Activated T-helper 2 cell treated with anti-CD3 and anti-CD28 coated beads, Interferon-gamma antibody, Interleukin-2, Interleukin-4, amounts not matched to agents 10 μg/mL and 5 μg/mL and 100 μg/mL, durations not matched to agents 14 hours and 24 hours and 36 hours (primary cell): ENCODE measurements at regions of chr20 and their contacts with region 1.

Region 1: GRCh38 chr20:58980700-58981627 is at the start of gene NELFCD:
- DNase-seq: peak; percentile 83
- H3K4me3 Mint-ChIP-seq: peak within 1 kb of the TSS; percentile 93
- H3K27ac Mint-ChIP-seq: peak within 1 kb of the TSS; percentile 90
- H3K4me1 Mint-ChIP-seq: peaks cover 27% of the 10 kb centered on the region
- H3K27me3 Mint-ChIP-seq: peaks cover 3% of the 10 kb centered on the region
- total RNA-seq, gene NELFCD: 111 and 113 TPM in 2 replicates

Region 2: GRCh38 chr20:58141971-58142781 is 838.8 kb before region 1 on chr20:
- intact Hi-C with region 1: no loop called
- DNase-seq: no peak
- H3K4me3 Mint-ChIP-seq: no peak overlapping the region
- H3K27ac Mint-ChIP-seq: no peak overlapping the region
- H3K4me1 Mint-ChIP-seq: no peaks in the 10 kb centered on the region
- H3K27me3 Mint-ChIP-seq: peaks cover under 1% of the 10 kb centered on the region

Region 3: GRCh38 chr20:59032023-59032712 is 51.2 kb after region 1 on chr20 and contains the start of gene ATP5F1E:
- intact Hi-C with region 1: loop called (anchors 5 kb)
- DNase-seq: peak; percentile 94
- H3K4me3 Mint-ChIP-seq: peak within 1 kb of the TSS; percentile 93
- H3K27ac Mint-ChIP-seq: peak within 1 kb of the TSS; percentile 89
- H3K4me1 Mint-ChIP-seq: peaks cover 65% of the 10 kb centered on the region
- H3K27me3 Mint-ChIP-seq: no peaks in the 10 kb centered on the region
- total RNA-seq, gene ATP5F1E: 61.2 and 66.9 TPM in 2 replicates